ENCODE measurements at regions of chr16 and their contacts with region 1.

Region 1: DNA sequence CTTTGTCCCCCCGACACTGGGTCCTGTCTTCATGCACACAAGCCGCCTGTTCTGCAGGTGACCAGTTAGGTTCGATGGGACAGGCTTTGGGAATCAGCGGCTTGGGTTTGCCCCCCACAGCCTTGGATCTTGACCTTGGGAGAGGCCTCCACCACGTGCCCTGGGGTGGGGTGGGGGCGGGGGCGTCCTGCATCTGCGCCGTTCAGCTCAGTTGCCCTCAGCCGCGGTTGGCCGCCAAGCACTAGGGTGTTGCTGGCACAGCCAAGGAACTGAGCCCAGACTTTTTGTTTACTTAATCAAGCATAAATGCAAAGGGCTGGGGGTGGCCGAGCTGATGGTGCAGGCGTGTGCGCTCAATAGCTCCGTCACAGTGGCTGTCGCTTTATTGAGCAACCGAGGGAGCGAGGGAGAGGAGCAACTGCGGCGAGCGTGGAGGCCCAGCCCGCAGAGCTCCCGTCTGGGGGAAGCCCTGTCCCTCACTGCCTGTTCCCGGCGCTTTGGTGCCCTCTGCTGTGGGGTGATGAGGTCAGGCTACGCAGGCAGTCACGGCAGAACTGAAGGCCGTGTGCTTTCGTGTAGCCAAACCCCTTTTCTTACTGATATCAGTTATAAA is 33.9 kb downstream of the JPH3 start:
- DNase-seq: peak; percentile 69
- H3K4me3 ChIP-seq: no peak overlapping the region
- H3K27ac ChIP-seq: no peak overlapping the region
- H3K4me1 ChIP-seq: peaks cover 8% of the 10 kb centered on the region
- H3K27me3 ChIP-seq: peaks cover 3% of the 10 kb centered on the region
- CTCF ChIP-seq: peak; percentile 62 to 82

Region 2: DNA sequence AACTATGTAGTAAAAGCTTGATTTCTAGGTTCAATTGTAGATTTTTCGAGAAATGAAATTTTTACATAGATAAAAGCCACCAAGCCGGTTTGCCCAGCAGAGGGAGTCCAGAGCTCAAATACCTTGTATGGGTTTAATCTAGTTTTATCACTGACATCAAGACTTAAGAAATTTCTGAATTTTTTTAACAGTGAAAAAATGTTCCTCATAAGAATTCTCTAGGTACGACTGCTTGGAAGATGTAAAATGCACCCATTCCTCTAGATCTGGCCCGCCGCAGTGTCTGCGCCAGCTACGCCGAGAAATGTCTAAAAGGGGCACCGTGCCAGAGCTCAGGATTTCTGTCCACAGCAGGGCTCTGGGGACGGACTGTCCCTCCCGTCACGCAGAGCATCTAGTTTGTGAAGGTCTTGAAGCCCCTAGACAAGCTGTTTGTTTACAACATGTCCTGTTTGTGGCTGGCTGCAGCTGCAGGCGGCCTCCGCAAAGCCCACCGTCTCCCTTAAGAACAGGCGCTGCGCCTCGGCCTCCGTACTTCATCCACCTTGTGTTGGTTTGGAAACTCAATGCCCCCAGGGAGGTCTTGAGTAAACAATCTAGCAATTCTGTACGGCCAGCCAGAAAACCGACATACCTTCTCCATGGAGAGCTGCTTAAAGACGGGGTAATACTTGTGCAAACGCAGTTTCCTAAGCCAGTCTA is 219.2 kb before region 1 on chr16:
- CTCF ChIA-PET with region 1: no interaction called
- dilution Hi-C with region 1: no loop called
- in situ Hi-C with region 1: loop called (anchors 10 to 25 kb)
- intact Hi-C with region 1: loop called (anchors 1 kb)
- DNase-seq: no peak
- H3K4me3 ChIP-seq: no peak overlapping the region
- H3K27ac ChIP-seq: no peak overlapping the region
- H3K4me1 ChIP-seq: no peaks in the 10 kb centered on the region
- H3K27me3 ChIP-seq: no peaks in the 10 kb centered on the region
- CTCF ChIP-seq: peak; percentile 49 to 61

Region 3: DNA sequence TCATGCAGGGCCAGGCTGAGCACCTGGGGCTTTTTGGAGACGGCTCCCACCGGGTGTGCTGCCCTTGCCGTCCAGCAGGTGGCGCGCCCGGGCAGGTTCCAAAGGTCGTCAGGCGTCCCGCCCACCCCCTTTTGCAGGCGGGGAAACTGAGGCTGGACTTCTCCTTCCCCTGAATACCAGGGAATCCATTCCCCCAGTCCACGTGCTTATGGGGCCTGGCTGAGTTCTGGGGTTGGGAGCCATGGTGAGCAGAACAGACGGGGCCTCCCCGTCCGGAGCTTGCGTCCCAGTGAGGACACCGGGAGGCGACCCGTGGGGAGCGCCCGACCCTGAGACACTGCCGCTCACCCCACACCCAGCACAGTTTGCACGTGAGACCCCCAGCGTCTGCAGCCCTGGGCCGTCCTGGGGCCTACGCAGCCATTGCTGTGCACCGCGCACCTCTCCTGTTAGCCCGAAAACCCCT is 85.6 kb before region 1 on chr16:
- CTCF ChIA-PET with region 1: no interaction called
- dilution Hi-C with region 1: no loop called
- in situ Hi-C with region 1: no loop called
- intact Hi-C with region 1: loop called (anchors 1 kb)
- DNase-seq: no peak
- H3K4me3 ChIP-seq: no peak overlapping the region
- H3K27ac ChIP-seq: no peak overlapping the region
- H3K4me1 ChIP-seq: no peaks in the 10 kb centered on the region
- H3K27me3 ChIP-seq: no peaks in the 10 kb centered on the region
- CTCF ChIP-seq: peak; percentile 76 to 92

Region 4: GRCh38 chr16:87587636-87588035 is 48.5 kb before region 1 on chr16:
- CTCF ChIA-PET with region 1: interaction called, 6 read pairs
- dilution Hi-C with region 1: no loop called
- in situ Hi-C with region 1: loop called in 1 of 2 experiments (anchors 5 kb)
- intact Hi-C with region 1: loop called (anchors 1 kb)
- DNase-seq: no peak
- H3K4me3 ChIP-seq: no peak overlapping the region
- H3K27ac ChIP-seq: no peak overlapping the region
- H3K4me1 ChIP-seq: peaks cover 2% of the 10 kb centered on the region
- H3K27me3 ChIP-seq: peaks cover 9% of the 10 kb centered on the region
- CTCF ChIP-seq: no peak

Region 5: DNA sequence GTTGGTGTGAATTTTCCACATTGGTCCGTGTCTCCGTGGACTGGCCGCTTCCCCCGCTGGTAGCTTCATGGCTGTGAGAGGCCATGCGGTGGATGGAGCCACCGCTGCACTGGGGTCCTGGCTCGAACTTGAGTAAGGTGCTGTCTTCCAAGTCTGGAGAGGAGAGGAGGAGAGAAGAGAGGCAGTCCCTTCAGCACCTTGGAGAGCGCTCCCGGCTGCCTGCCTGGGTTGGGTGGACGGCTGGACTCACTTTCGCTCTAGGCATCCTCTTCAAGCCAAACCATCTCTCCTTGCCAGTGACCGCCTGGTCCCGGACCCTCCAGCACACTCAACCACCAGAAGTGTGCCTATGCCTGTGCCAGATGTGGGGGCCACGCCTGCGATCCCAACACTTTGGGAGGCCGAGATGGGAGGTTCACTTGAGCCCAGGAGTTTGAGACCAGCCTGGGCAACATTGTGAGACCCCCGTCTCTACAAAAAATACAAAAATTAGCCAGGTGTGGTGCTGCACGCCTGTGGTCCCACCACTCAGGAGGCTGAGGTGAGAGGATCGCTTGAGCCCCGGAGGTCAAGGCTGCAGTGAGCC is 27.7 kb before region 1 on chr16:
- CTCF ChIA-PET with region 1: no interaction called
- dilution Hi-C with region 1: no loop called
- in situ Hi-C with region 1: no loop called
- intact Hi-C with region 1: no loop called
- DNase-seq: peak; percentile 46
- H3K4me3 ChIP-seq: no peak overlapping the region
- H3K27ac ChIP-seq: no peak overlapping the region
- H3K4me1 ChIP-seq: no peaks in the 10 kb centered on the region
- H3K27me3 ChIP-seq: peaks cover 18% of the 10 kb centered on the region
- CTCF ChIP-seq: no peak

Measured in mammary epithelial cell (primary cell).